H1 (cell line): ENCODE measurements at regions of chr5 and their contacts with region 1.

Region 1: GRCh38 chr5:72816311-72817145 is at the start of gene TNPO1:
- DNase-seq: peak; percentile 84 to 92
- H3K4me3 ChIP-seq: peak within 1 kb of the TSS; percentile 76 to 87 (median 81)
- H3K27ac ChIP-seq: peak within 1 kb of the TSS; percentile 86
- H3K4me1 ChIP-seq: peaks cover 0 to 6% (median 1%) of the 10 kb centered on the region in 4 experiments; a peak in 5 of 7 replicates
- H3K27me3 ChIP-seq: no peaks in the 10 kb centered on the region
- CTCF ChIP-seq: no peak
- EP300 ChIP-seq: no peak
- POLR2A ChIP-seq: peak; percentile 95 to 97
- RAD21 ChIP-seq: no peak
- total RNA-seq, gene TNPO1: 183 and 211 TPM in 2 replicates

Region 2: DNA sequence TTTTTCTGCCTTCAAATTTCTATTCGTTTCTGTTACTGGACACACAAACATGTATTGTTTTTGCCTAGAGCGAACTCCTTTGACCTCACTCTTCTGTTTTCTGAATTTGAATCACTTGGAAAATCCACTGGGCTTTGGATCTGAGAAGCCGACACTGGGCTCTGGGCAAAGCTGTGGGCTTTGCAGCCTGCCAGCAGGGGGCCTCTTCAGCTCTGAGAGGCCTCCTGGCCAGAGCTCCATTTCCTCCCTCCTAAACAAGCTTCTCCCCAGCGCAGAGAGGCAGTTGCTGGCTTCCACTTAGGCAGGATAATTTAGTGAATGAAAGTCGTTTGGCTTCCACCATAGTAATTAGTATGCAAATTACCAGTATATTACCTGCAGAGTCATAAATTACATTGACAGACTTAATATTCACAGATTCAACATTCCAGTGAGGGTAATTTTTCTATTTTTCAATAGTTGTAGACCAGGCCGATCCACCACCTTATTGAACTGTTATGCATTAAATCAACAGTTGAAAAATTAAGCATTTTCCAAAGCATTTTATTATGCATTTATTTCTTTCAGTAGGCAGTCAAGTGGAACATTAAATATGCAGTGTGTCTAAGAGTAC is 205.3 kb before region 1 on chr5:
- CTCF ChIA-PET with region 1: interaction called, 25 read pairs
- POLR2A ChIA-PET with region 1: no interaction called
- DNase-seq: peak; percentile 39 to 67
- H3K4me3 ChIP-seq: no peak overlapping the region
- H3K27ac ChIP-seq: no peak overlapping the region
- H3K4me1 ChIP-seq: no peaks in the 10 kb centered on the region
- H3K27me3 ChIP-seq: no peaks in the 10 kb centered on the region
- CTCF ChIP-seq: peak; percentile 59 to 71 (median 69)
- EP300 ChIP-seq: no peak
- POLR2A ChIP-seq: no peak
- RAD21 ChIP-seq: peak; percentile 68 to 79

Region 3: DNA sequence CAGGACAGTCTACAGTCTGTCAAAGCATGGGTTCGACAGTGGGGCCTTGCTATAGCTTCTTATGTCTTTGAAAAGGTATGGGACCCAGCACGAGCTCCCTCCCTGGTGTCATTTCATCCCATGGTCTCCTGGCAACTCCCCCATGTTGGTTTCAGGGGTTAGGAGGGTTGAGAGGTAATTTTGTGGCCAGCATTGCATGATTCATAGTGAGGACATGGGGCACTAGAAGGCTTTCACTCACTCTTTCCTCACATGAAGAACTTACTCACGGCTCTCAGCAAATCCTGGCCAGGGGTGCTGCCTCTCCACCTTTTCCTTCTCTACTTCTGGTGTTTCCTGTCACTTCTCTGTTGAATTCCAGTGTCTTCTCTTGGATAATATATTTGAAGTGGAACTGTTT is 134.7 kb before region 1 on chr5:
- CTCF ChIA-PET with region 1: no interaction called
- POLR2A ChIA-PET with region 1: no interaction called
- DNase-seq: no peak
- H3K4me3 ChIP-seq: no peak overlapping the region
- H3K27ac ChIP-seq: no peak overlapping the region
- H3K4me1 ChIP-seq: no peaks in the 10 kb centered on the region
- H3K27me3 ChIP-seq: no peaks in the 10 kb centered on the region
- CTCF ChIP-seq: no peak
- EP300 ChIP-seq: no peak
- POLR2A ChIP-seq: no peak
- RAD21 ChIP-seq: no peak

Region 4: DNA sequence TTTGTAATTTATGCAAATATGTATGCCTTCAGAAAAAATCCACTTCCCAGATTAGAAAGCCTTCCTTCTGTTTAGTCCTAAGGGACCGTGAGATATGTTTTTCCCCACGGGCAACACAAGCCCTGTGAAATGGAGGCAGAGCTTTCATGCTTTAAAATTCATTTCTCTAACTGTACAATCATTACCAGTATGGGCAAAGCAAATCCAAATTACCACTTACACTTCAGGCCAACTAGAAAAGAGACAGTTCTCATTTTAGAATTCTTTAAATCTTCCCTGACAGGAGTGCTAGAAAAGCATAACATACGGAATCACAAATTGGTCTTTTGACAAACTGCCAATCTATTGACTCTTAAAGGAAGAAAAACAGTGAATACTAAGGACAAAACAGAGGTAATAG is 20.5 kb before region 1 on chr5:
- CTCF ChIA-PET with region 1: no interaction called
- POLR2A ChIA-PET with region 1: no interaction called
- DNase-seq: no peak
- H3K4me3 ChIP-seq: no peak overlapping the region
- H3K27ac ChIP-seq: no peak overlapping the region
- H3K4me1 ChIP-seq: peaks cover 0 to 4% (median under 1%) of the 10 kb centered on the region in 4 experiments; a peak in 1 of 7 replicates
- H3K27me3 ChIP-seq: no peaks in the 10 kb centered on the region
- CTCF ChIP-seq: no peak
- EP300 ChIP-seq: no peak
- POLR2A ChIP-seq: no peak
- RAD21 ChIP-seq: no peak

Region 5: DNA sequence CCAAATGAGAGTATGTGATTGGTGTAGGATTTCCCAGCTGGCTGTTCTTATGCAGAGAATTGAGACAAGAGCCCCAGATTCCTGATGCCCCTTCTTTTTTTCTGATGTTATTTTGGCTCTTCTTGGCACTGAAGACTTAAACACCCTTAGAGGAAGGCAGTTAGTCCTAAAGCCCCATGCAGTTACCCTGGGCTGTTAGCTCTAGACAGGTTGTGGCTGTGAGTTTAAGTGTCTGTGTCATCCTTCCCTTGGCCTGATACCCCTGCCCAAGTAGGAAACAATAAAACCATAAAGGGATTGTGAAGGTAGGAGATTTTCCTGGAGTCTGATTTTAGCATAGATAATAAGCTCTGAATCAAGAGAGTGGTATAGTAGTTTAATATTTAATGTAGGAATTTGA is 13.2 kb after region 1 on chr5:
- CTCF ChIA-PET with region 1: interaction called, 16 read pairs
- POLR2A ChIA-PET with region 1: interaction called, 9 read pairs
- DNase-seq: no peak
- H3K4me3 ChIP-seq: no peak overlapping the region
- H3K27ac ChIP-seq: no peak overlapping the region
- H3K4me1 ChIP-seq: peaks cover 0 to 5% (median 2%) of the 10 kb centered on the region in 4 experiments; a peak in 4 of 7 replicates
- H3K27me3 ChIP-seq: peaks cover 0 to 1% (median 0%) of the 10 kb centered on the region in 4 experiments; a peak in 1 of 7 replicates
- CTCF ChIP-seq: no peak
- EP300 ChIP-seq: no peak
- POLR2A ChIP-seq: no peak
- RAD21 ChIP-seq: no peak

Region 6: DNA sequence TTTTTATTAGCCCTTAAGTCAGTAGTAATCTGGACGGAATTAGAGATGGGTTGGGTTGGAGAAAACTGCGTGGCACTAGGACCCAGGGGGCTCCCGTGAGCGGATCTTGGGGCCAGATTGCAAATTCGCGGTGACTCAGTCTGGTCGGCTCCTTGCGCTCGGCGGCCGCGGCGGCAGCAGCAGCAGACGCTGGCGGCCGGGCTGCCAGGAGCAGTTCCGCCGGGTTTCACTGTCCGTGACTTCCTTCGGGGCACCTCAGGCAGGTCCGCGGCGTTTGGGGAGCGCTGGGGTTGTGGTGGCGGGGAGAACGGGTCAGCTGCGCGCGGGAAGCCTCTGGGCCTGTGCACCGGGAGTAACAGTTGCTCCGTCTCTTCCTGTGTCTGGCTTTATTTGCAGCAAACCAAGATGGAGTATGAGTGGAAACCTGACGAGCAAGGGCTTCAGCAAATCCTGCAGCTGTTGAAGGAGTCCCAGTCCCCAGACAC is 31.5 kb after region 1 on chr5:
- CTCF ChIA-PET with region 1: interaction called, 8 read pairs
- POLR2A ChIA-PET with region 1: interaction called, 18 read pairs
- DNase-seq: peak; percentile 57 to 88
- H3K4me3 ChIP-seq: peak overlapping the region; percentile 88 to 99 (median 94)
- H3K27ac ChIP-seq: peak overlapping the region; percentile 96
- H3K4me1 ChIP-seq: peaks cover 0 to 5% (median 2%) of the 10 kb centered on the region in 4 experiments; a peak in 2 of 7 replicates
- H3K27me3 ChIP-seq: no peaks in the 10 kb centered on the region
- CTCF ChIP-seq: no peak
- EP300 ChIP-seq: peak in 1 of 2 experiments; percentile 72; a peak in 1 of 3 replicates
- POLR2A ChIP-seq: peak; percentile 96 to 99
- RAD21 ChIP-seq: peak in 1 of 2 experiments; percentile 20; a peak in 2 of 4 replicates